Activated naive CD4-positive, alpha-beta T cell treated with anti-CD3 and anti-CD28 coated beads for 36 hours (primary cell): ENCODE measurements at regions of chr10 and their contacts with region 1.

Region 1: GRCh38 chr10:32882077-32882476 is 76.0 kb downstream of the ITGB1 start:
- DNase-seq: no peak
- H3K4me3 Mint-ChIP-seq: no peak overlapping the region
- H3K27ac Mint-ChIP-seq: no peak overlapping the region
- H3K4me1 Mint-ChIP-seq: peaks cover 3% of the 10 kb centered on the region
- H3K27me3 Mint-ChIP-seq: no peaks in the 10 kb centered on the region

Region 2: DNA sequence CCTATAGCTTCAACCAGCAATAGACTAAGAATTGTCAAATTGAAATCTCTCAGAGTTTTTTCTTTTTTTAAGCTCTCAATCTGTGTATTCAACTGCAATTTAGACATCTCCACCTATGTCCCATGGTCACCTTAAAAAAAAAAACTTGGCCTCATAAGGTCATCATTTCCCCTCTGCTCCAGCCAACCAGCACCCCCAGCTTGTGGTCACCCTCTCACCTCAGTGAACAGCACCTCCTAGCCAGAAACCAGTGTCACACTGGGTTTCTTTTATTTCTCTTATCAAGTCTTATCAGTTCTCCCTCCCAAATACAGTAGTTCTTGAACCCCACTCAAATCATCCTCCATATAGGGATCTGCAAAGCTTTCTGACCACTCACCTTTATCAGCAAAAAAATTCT is 72.0 kb after region 1 on chr10:
- CTCF ChIA-PET with region 1: no interaction called
- intact Hi-C with region 1: no loop called
- DNase-seq: no peak
- H3K4me3 Mint-ChIP-seq: no peak overlapping the region
- H3K27ac Mint-ChIP-seq: no peak overlapping the region
- H3K4me1 Mint-ChIP-seq: peaks cover 58% of the 10 kb centered on the region
- H3K27me3 Mint-ChIP-seq: no peaks in the 10 kb centered on the region

Region 3: DNA sequence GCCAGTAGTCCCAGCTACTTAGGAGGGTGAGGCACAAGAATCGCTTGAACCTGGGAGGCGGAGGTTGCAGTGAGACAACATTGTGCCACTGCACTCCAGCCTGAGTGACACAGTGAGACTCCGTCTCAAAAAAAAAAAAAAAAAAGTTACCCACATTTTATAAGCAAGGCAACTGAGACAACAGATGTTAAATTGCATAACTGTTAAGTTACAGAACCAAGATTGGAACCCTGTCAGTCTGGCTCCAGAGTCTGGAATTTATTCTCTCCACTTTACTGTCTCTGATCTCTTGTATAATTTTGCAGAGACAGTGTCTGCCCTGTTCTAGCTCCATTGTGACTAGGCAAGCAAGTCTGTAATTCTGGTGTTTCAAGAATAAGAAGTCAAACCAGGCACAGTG is 82.2 kb after region 1 on chr10:
- CTCF ChIA-PET with region 1: interaction called, 10 read pairs
- intact Hi-C with region 1: no loop called
- DNase-seq: no peak
- H3K4me3 Mint-ChIP-seq: no peak overlapping the region
- H3K27ac Mint-ChIP-seq: no peak overlapping the region
- H3K4me1 Mint-ChIP-seq: peaks cover 11% of the 10 kb centered on the region
- H3K27me3 Mint-ChIP-seq: peaks cover 10% of the 10 kb centered on the region

Region 4: DNA sequence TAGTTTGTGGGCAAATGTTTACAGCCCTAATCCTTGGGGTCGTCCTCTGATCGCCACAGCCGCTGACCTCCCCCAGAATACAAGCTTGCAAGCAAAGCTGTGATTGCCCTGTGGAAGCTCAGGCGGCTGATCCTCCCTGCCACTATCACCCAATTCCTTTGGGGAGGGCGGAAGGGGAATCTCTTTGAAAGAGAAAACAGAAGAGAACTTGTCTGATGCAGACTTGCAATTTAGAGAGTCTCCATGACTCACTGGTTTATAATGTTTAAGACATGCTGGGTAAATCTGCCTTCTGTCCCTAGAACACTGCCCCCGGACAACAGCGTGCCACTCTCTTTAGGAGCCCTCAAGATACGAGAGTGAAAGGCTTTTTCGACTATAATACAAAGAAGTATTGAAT is 376.9 kb after region 1 on chr10:
- CTCF ChIA-PET with region 1: no interaction called
- intact Hi-C with region 1: no loop called
- DNase-seq: no peak
- H3K4me3 Mint-ChIP-seq: no peak overlapping the region
- H3K27ac Mint-ChIP-seq: no peak overlapping the region
- H3K4me1 Mint-ChIP-seq: peaks cover 9% of the 10 kb centered on the region
- H3K27me3 Mint-ChIP-seq: peaks cover 39% of the 10 kb centered on the region